Head of caudate nucleus (tissue), 42 donors: ENCODE measurements at regions of chr11 and their contacts with region 1.

Region 1: GRCh38 chr11:86818466-86819192 is 18.3 kb downstream of the PRSS23 start:
- DNase-seq: peak in 6 of 42 donors; percentile 8 to 55 (median 25)

Region 2: DNA sequence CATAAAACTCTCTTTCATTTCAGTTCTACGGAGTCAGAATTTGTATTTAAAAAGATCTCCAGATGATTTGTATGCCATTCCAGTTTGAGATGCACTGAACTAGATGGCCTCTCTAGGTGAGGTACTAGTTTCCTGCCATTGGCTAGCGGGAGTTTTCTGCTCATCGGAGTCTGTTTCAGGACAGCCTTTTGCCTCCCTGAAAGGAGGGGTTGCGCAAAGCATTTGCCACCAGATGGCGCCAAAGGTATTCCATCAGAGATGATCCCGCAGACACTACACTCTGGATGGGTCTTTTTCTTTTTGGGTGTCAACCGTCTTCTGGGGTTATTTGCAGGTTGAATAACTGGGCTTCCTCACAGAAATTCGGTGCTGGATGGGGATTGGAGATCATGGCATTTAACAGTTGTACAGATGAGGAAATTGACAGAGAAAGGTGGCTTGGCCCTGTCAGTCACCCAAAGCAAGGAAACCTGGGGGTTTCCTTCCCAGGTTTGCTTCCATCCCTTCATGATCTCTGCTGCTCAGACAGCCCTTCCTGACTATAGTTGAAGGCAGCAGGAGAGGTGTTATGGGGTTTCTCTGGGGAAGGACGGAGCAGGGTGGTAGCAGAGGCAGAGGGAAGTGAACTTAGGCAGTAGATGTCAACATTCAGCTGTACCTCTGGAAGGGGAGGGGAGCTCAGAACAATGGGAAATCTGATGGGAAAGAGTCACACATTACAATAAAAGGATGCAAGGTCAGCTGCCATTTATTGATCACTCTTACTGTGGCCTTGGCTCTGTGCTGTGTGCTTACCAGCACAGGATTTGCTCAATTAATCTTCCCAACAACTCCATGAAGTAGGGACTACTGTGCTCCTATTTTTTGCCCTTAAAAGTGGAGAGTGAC is 362.3 kb before region 1 on chr11:
- intact Hi-C with region 1: loop called (anchors 2 kb)
- DNase-seq: peak; percentile 64 to 95 (median 88)